Naive thymus-derived CD4-positive, alpha-beta T cell (primary cell): ENCODE measurements at regions of chr14 and their contacts with region 1.

Region 1: GRCh38 chr14:50532502-50533240 is at the start of gene MAP4K5:
- DNase-seq: peak; percentile 76 to 90 (median 85)
- ATAC-seq: peak; percentile 97
- H3K4me3 ChIP-seq: peak within 1 kb of the TSS; percentile 50
- H3K4me3 Mint-ChIP-seq: peak within 1 kb of the TSS; percentile 82 to 93 (median 91)
- H3K27ac ChIP-seq: peak within 1 kb of the TSS; percentile 78
- H3K27ac Mint-ChIP-seq: peak within 1 kb of the TSS; percentile 64 to 96 (median 89)
- H3K4me1 ChIP-seq: peaks cover 16 to 24% of the 10 kb centered on the region in 2 donors
- H3K4me1 Mint-ChIP-seq: peaks cover 36 to 59% (median 46%) of the 10 kb centered on the region in 7 donors
- H3K27me3 ChIP-seq: no peaks in the 10 kb centered on the region
- H3K27me3 Mint-ChIP-seq: peaks cover 0 to 21% (median 0%) of the 10 kb centered on the region in 5 donors
- total RNA-seq, gene MAP4K5: 30.0 to 47.5 (median 35.1) TPM

Region 2: DNA sequence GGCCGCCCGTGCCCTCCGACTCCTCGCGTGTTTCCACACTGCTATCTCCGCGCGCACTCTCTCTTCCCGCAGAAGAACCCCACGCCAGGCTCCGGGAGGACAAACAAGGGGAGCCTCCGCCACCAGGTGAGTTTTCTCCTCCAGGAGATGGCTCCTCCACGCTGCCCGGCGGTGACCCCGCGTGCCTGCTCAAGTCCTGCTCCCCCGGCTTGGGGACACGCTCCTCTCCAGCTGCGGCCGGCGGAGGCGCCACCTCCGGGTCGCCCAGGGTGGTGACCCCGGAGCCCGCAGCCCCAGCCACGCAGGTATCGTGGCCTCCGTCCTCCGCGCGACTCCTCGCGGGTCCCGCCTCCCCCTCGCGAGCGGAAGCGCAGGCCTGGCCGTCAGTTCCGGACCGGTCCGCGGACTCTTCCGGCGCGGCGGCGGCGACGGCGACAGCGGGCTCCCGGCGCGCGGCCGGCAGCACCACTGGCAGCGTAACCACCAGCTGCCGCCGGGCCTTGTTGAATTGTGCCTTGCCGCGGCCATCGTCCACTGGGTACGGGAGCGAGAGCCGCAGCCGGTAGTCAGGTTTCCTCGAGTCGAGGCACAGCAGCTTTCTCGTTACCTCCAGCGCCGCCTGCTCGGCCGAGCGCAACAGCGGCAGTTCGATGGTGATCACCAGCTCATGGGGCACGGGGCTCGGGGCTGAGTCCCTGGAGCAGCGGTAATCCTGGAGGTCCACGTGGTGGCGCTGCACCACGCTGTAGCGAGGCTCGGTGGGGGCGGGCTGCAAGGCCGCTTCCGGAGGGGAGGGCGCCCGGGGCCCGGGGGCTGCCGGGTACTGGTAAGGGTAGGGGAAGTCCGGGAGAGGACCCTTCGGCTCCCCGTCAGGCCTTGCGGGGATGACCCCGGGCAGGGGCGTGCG is 898.8 kb before region 1 on chr14:
- CTCF ChIA-PET with region 1: no interaction called
- POLR2A ChIA-PET with region 1: no interaction called
- intact Hi-C with region 1: loop called in 1 of 2 experiments (anchors 1 kb)
- DNase-seq: peak; percentile 89 to 96 (median 93)
- ATAC-seq: peak; percentile 92
- H3K4me3 ChIP-seq: peak overlapping the region; percentile 99
- H3K4me3 Mint-ChIP-seq: peak overlapping the region; percentile 81 to 99 (median 96)
- H3K27ac ChIP-seq: peak overlapping the region; percentile 96
- H3K27ac Mint-ChIP-seq: peak overlapping the region; percentile 71 to 96 (median 90)
- H3K4me1 ChIP-seq: peaks cover 19 to 29% of the 10 kb centered on the region in 2 donors
- H3K4me1 Mint-ChIP-seq: peaks cover 35 to 71% (median 52%) of the 10 kb centered on the region in 7 donors
- H3K27me3 ChIP-seq: no peaks in the 10 kb centered on the region
- H3K27me3 Mint-ChIP-seq: no peaks in the 10 kb centered on the region

Region 3: GRCh38 chr14:49875701-49876100 is 657.0 kb before region 1 on chr14:
- CTCF ChIA-PET with region 1: no interaction called
- POLR2A ChIA-PET with region 1: no interaction called
- intact Hi-C with region 1: no loop called
- DNase-seq: no peak
- ATAC-seq: no peak
- H3K4me3 ChIP-seq: no peak overlapping the region
- H3K4me3 Mint-ChIP-seq: no peak overlapping the region
- H3K27ac ChIP-seq: no peak overlapping the region
- H3K27ac Mint-ChIP-seq: peak overlapping the region in 1 of 9 donors; percentile 16
- H3K4me1 ChIP-seq: peaks cover 0 to 6% of the 10 kb centered on the region in 2 donors
- H3K4me1 Mint-ChIP-seq: peaks cover 4 to 23% (median 10%) of the 10 kb centered on the region in 7 donors
- H3K27me3 ChIP-seq: no peaks in the 10 kb centered on the region
- H3K27me3 Mint-ChIP-seq: peaks cover 0 to 3% (median 0%) of the 10 kb centered on the region in 5 donors

Region 4: GRCh38 chr14:49971156-49972130 is 561.2 kb before region 1 on chr14:
- CTCF ChIA-PET with region 1: no interaction called
- POLR2A ChIA-PET with region 1: no interaction called
- intact Hi-C with region 1: loop called in 1 of 2 experiments (anchors 5 kb)
- DNase-seq: peak in 8 of 9 donors; percentile 59 to 94 (median 90)
- ATAC-seq: peak; percentile 92
- H3K4me3 ChIP-seq: peak overlapping the region; percentile 40
- H3K4me3 Mint-ChIP-seq: peak overlapping the region; percentile 75 to 96 (median 86)
- H3K27ac ChIP-seq: peak overlapping the region; percentile 74
- H3K27ac Mint-ChIP-seq: peak overlapping the region; percentile 96 to 99 (median 99)
- H3K4me1 ChIP-seq: peaks cover 35 to 49% of the 10 kb centered on the region in 2 donors
- H3K4me1 Mint-ChIP-seq: peaks cover 32 to 88% (median 63%) of the 10 kb centered on the region in 7 donors
- H3K27me3 ChIP-seq: no peaks in the 10 kb centered on the region
- H3K27me3 Mint-ChIP-seq: no peaks in the 10 kb centered on the region

Region 5: DNA sequence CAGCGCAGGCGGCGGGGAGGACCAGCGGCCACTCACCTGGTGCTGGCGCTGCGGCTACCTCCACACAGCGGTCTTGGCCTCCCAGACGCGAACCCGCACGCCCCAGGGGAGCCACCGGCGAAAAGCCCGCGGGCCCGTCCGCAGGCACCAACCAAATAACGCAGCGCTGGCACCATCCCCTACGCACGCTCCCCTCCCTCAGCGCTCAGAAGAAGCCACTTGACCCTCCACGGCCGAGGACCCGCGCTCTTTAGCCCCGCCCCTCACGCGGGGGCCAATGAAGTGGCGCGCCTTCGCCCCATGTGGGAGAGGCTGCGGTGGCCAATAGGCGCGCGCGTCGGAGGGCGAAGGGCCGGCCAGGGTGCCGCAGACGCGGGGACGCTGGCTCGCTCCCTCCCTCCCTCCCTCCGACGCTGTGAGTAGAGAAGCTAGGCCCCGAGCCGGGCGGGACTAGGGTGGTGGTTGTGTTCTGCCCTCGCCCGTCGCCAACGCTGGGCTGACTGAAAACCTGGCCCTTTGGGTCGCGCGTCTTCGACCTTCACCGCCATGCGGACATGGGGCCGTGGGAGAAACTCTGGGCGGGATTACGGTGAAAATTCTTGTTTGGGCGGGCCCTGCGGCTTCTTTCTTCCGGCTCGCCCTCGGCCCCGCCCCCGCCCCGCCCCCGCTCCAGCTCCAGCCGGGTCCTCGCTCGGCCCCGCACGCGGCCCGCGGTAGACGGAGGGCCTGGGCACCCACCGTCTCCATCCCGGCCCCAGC is 220.5 kb before region 1 on chr14 and contains the starts of genes DMAC2L and L2HGDH:
- CTCF ChIA-PET with region 1: no interaction called
- POLR2A ChIA-PET with region 1: no interaction called
- intact Hi-C with region 1: loop called (anchors 1 kb)
- DNase-seq: peak; percentile 80 to 95 (median 88)
- ATAC-seq: peak; percentile 94
- H3K4me3 ChIP-seq: peak within 1 kb of the TSS; percentile 88
- H3K4me3 Mint-ChIP-seq: peak within 1 kb of the TSS; percentile 86 to 99 (median 96)
- H3K27ac ChIP-seq: peak within 1 kb of the TSS; percentile 84
- H3K27ac Mint-ChIP-seq: peak within 1 kb of the TSS; percentile 95 to 99 (median 98)
- H3K4me1 ChIP-seq: peaks cover 11 to 12% of the 10 kb centered on the region in 2 donors
- H3K4me1 Mint-ChIP-seq: peaks cover 16 to 56% (median 46%) of the 10 kb centered on the region in 7 donors
- H3K27me3 ChIP-seq: no peaks in the 10 kb centered on the region
- H3K27me3 Mint-ChIP-seq: no peaks in the 10 kb centered on the region
- total RNA-seq, gene DMAC2L: 15.5 to 21.2 (median 16.7) TPM
- total RNA-seq, gene L2HGDH: 3.7 to 10.1 (median 4.8) TPM

Region 6: GRCh38 chr14:50396631-50397390 is 135.9 kb before region 1 on chr14 and contains the start of gene CDKL1:
- CTCF ChIA-PET with region 1: no interaction called
- POLR2A ChIA-PET with region 1: no interaction called
- intact Hi-C with region 1: loop called in 1 of 2 experiments (anchors 5 kb)
- DNase-seq: peak; percentile 9 to 74 (median 17)
- ATAC-seq: peak; percentile 78
- H3K4me3 ChIP-seq: peak within 1 kb of the TSS; percentile 78
- H3K4me3 Mint-ChIP-seq: peak within 1 kb of the TSS; percentile 83 to 95 (median 89)
- H3K27ac ChIP-seq: no peak within 1 kb of the TSS
- H3K27ac Mint-ChIP-seq: peak within 1 kb of the TSS in 8 of 9 donors; percentile 14 to 80 (median 44)
- H3K4me1 ChIP-seq: no peaks in the 10 kb centered on the region
- H3K4me1 Mint-ChIP-seq: peaks cover 11 to 24% (median 12%) of the 10 kb centered on the region in 7 donors
- H3K27me3 ChIP-seq: no peaks in the 10 kb centered on the region
- H3K27me3 Mint-ChIP-seq: peaks cover 0 to 24% (median 6%) of the 10 kb centered on the region in 5 donors
- total RNA-seq, gene CDKL1: 2.6 to 14.8 (median 4.9) TPM

Region 7: DNA sequence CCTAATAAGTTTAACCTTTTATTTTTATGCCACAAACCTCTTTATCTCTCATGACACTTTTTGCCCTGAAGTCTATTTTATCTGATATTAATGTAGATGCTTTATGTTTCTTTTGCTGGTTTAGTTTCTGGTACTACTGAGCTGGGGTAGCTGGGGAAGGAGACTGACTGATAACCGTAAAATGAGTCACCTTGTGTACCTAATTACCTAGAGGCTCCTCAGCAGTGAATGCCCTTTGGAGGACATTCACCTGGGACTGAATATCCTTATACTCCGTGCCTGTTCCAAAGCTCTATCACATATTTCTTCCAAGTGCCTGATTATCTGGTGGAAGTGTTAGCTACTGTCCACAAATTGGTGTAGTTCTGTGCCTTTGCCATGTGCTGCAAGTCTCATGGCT is 41.2 kb after region 1 on chr14:
- CTCF ChIA-PET with region 1: no interaction called
- POLR2A ChIA-PET with region 1: no interaction called
- intact Hi-C with region 1: no loop called
- DNase-seq: no peak
- ATAC-seq: no peak
- H3K4me3 ChIP-seq: no peak overlapping the region
- H3K4me3 Mint-ChIP-seq: no peak overlapping the region
- H3K27ac ChIP-seq: no peak overlapping the region
- H3K27ac Mint-ChIP-seq: no peak overlapping the region
- H3K4me1 ChIP-seq: no peaks in the 10 kb centered on the region
- H3K4me1 Mint-ChIP-seq: no peaks in the 10 kb centered on the region
- H3K27me3 ChIP-seq: no peaks in the 10 kb centered on the region
- H3K27me3 Mint-ChIP-seq: peaks cover 0 to 11% (median 0%) of the 10 kb centered on the region in 5 donors

Region 8: DNA sequence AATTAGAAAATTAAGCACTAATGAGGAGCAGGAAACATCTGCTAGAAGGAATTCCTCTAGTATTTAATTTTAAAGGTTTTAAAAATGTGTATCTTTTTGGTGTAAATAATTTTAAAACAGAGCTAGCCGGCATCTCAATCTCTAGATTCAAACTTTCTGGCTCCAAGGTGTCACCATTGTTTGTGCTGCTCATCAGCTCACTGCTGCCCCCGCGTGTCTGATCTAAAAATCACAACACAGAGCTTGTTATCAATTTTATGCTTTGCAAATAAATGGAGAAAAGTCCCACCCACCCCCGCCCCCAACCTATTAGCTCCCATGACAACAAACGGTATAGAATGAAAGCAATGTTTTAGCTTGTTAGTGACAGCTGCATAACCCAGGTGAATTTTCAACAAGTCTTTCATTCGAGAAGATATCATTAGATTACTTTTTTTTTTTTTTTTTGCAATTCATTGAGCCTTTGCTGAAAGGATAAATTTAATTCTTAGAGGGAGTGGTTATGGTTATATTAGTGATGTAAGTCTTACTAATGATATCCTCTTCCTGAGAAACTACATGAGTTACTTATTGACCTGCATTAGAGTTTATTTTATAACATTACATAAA is 327.9 kb after region 1 on chr14:
- CTCF ChIA-PET with region 1: interaction called, 3 read pairs
- POLR2A ChIA-PET with region 1: no interaction called
- intact Hi-C with region 1: loop called in 1 of 2 experiments (anchors 2 kb)
- DNase-seq: peak; percentile 80 to 90 (median 86)
- ATAC-seq: peak; percentile 90
- H3K4me3 ChIP-seq: peak overlapping the region; percentile 84
- H3K4me3 Mint-ChIP-seq: peak overlapping the region; percentile 89 to 95 (median 92)
- H3K27ac ChIP-seq: peak overlapping the region; percentile 56
- H3K27ac Mint-ChIP-seq: peak overlapping the region; percentile 83 to 95 (median 88)
- H3K4me1 ChIP-seq: peaks cover 7% of the 10 kb centered on the region in 2 donors
- H3K4me1 Mint-ChIP-seq: peaks cover 3 to 23% (median 11%) of the 10 kb centered on the region in 7 donors
- H3K27me3 ChIP-seq: no peaks in the 10 kb centered on the region
- H3K27me3 Mint-ChIP-seq: peaks cover 0 to 33% (median 2%) of the 10 kb centered on the region in 5 donors